Activated CD4-positive, alpha-beta memory T cell treated with anti-CD3 and anti-CD28 coated beads for 36 hours (primary cell): ENCODE measurements at regions of chr9 and their contacts with region 1.

Region 1: GRCh38 chr9:14993061-14993800 is 83.0 kb upstream of the FREM1 start:
- DNase-seq: peak; percentile 75
- H3K4me3 Mint-ChIP-seq: peak overlapping the region; percentile 62
- H3K27ac Mint-ChIP-seq: peak overlapping the region; percentile 2
- H3K4me1 Mint-ChIP-seq: peaks cover 28% of the 10 kb centered on the region
- H3K27me3 Mint-ChIP-seq: peaks cover 2% of the 10 kb centered on the region

Region 2: DNA sequence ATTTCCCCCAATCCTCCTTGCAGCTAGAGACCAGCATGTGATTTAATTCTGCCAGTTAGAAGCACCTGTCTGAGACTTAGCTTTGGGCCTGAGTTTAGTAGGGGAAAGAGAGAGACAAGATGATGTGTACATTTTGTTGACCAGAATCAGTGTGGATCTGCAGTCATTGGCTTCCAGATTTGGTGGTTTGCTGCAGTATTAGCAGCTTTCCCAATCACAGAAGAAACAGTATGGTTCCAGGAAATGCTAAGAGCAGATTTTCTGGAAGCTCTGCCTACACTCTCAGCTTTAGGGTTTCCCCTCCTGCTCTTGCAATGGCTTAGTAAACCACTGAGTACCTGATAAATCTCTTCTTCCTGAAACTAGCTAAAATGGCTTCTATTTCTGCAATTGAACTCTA is 34.2 kb before region 1 on chr9:
- CTCF ChIA-PET with region 1: no interaction called
- POLR2A ChIA-PET with region 1: no interaction called
- intact Hi-C with region 1: loop called (anchors 2 kb)
- DNase-seq: peak; percentile 20
- H3K4me3 Mint-ChIP-seq: no peak overlapping the region
- H3K27ac Mint-ChIP-seq: peak overlapping the region; percentile 64
- H3K4me1 Mint-ChIP-seq: peaks cover 24% of the 10 kb centered on the region
- H3K27me3 Mint-ChIP-seq: no peaks in the 10 kb centered on the region

Region 3: GRCh38 chr9:15306757-15307534 is 313.7 kb after region 1 on chr9 and contains the start of gene TTC39B:
- CTCF ChIA-PET with region 1: no interaction called
- POLR2A ChIA-PET with region 1: no interaction called
- intact Hi-C with region 1: no loop called
- DNase-seq: peak; percentile 89
- H3K4me3 Mint-ChIP-seq: peak within 1 kb of the TSS; percentile 99
- H3K27ac Mint-ChIP-seq: peak within 1 kb of the TSS; percentile 96
- H3K4me1 Mint-ChIP-seq: peaks cover 48% of the 10 kb centered on the region
- H3K27me3 Mint-ChIP-seq: no peaks in the 10 kb centered on the region
- total RNA-seq, gene TTC39B: 30.3 to 31.7 TPM